ENCODE measurements at regions of chr17 and their contacts with region 1.

Region 1: DNA sequence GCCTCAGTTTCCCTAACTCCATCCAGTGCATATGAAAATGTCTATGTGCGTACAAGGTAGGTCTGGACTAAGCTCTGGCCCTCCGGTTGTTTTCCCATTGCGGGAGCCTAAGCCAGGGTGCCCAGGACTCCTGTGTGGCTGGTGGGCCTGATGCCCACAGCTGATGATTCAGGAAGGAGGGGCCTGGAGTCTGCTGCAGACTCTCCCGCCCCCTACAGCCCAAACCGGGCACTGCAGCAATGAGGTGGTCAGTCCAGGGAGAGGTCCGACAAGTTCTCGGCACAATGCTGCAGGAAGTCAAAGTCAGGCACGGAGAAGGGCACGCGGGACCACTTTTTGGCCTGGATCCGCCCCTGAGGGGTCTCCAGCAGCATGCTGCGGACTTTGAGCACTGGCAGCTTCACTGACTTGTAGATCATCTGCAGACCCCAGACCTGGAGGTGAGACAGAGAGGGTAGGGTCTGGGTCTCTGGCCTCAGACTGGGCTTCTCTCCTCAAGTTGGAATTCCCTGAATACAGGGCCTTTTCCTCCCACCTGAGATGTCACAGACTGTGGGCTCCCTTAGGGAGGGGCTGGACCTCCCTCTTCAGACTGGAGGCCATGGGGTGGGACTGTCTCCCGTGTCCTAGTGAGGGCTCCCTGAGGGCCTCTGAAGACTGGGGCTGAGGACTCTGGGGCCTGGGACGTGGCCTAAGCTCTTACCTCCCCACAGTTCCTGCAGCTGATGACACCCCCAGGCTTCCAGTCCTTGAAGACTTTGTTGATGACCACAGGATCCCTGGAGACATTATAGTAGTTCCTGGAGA is 3.4 kb upstream of the ZNF385C start:
- DNase-seq: peak; percentile 37 to 83
- ATAC-seq: peak; percentile 85 to 96
- H3K4me3 ChIP-seq: peak overlapping the region in 1 of 4 donors; percentile 9
- H3K27ac ChIP-seq: no peak overlapping the region
- H3K4me1 ChIP-seq: peaks cover 12 to 15% of the 10 kb centered on the region in 2 donors
- H3K27me3 ChIP-seq: peaks cover 0 to 11% (median 8%) of the 10 kb centered on the region in 3 donors
- CTCF ChIP-seq: peak; percentile 89 to 96 (median 93)
- POLR2A ChIP-seq: no peak

Region 2: GRCh38 chr17:42027961-42028790 is 73.5 kb before region 1 on chr17:
- in situ Hi-C with region 1: loop called in 1 of 4 experiments (anchors 10 kb)
- intact Hi-C with region 1: loop called (anchors 1 kb)
- DNase-seq: no peak
- ATAC-seq: no peak
- H3K4me3 ChIP-seq: no peak overlapping the region
- H3K27ac ChIP-seq: peak overlapping the region in 1 of 4 donors; percentile 10
- H3K4me1 ChIP-seq: peaks cover 14 to 18% of the 10 kb centered on the region in 2 donors
- H3K27me3 ChIP-seq: no peaks in the 10 kb centered on the region
- CTCF ChIP-seq: no peak
- POLR2A ChIP-seq: no peak

Region 3: DNA sequence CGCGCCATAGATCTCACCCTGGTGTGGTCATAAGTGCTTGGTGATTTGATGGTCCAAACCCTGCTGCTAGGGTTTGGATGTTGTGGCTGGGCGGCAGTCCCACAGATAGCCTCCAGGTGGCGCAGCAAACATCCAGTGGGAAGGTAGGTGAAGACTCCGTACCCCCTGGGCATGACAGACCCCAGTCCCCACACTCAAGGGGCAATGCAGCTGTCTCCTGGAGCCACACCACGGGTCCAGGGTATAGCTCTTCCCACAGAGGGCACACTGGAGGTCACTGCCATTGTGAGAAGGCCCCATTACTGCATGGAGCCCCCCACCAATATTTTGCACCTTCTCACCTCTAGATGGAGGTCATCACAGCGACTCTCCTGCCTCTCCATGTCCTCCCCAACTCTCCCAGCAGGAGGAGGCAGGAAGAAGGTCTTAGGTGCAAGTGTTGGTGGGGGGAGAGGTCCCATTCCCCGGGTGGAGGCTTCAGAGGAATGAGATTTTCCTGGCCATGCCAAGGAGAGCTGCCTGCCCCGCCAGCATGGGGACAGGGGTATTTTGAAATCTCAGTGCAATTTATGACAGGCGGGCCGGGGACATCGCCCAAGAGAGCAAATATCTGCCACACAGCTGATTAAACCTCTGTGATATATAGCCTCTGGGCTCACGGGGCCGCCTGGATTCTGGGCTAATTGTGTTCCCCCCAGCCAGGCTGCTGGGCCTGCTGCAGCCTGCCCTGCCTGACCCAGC is 34.2 kb before region 1 on chr17:
- in situ Hi-C with region 1: loop called in 2 of 4 experiments (anchors 5 kb)
- intact Hi-C with region 1: loop called (anchors 1 kb)
- DNase-seq: peak; percentile 43 to 80
- ATAC-seq: peak; percentile 68 to 78
- H3K4me3 ChIP-seq: no peak overlapping the region
- H3K27ac ChIP-seq: peak overlapping the region; percentile 45 to 70 (median 61)
- H3K4me1 ChIP-seq: peaks cover 24 to 27% of the 10 kb centered on the region in 2 donors
- H3K27me3 ChIP-seq: no peaks in the 10 kb centered on the region
- CTCF ChIP-seq: peak; percentile 89 to 96 (median 95)
- POLR2A ChIP-seq: no peak